Sciatic nerve (tissue), 2 donors: ENCODE measurements at regions of chr11 and their contacts with region 1.

Region 1: DNA sequence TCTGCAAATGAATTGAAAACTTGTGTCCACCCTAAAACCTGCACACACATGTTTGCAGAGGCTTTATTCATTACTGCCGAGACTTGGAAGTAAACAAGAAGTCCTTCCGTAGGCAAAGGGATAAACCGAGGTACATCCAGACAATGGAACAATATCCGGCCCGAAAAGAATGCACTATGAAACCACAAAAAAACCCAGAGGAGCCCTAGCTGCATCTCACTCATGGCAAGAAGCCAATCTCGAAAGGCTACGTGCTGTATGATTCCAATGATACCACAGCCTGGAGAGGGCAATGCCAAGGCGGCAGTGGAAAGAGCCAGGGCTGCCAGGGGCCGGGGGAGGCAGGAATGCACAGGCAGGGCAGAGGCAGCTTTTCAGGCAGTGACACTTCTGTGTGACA is 3.2 kb upstream of the MRPL23 start:
- DNase-seq: peak; percentile 56
- ATAC-seq: no peak

Region 2: GRCh38 chr11:1896923-1897322 is 47.1 kb before region 1 on chr11:
- intact Hi-C with region 1: loop called (anchors 5 kb)
- DNase-seq: peak; percentile 57
- ATAC-seq: peak; percentile 45

Region 3: GRCh38 chr11:1988667-1989317 is 44.8 kb after region 1 on chr11:
- intact Hi-C with region 1: no loop called
- DNase-seq: peak; percentile 37
- ATAC-seq: no peak